Thyroid gland (tissue), 4 donors: ENCODE measurements at regions of chr1 and their contacts with region 1.

Region 1: GRCh38 chr1:212608209-212608955 is at the start of gene ATF3:
- DNase-seq: peak; percentile 100
- H3K4me3 ChIP-seq: peak within 1 kb of the TSS; percentile 14 to 77 (median 71)
- H3K27ac ChIP-seq: peak within 1 kb of the TSS; percentile 95 to 98 (median 97)
- H3K4me1 ChIP-seq: peaks cover 19 to 37% of the 10 kb centered on the region in 2 donors
- H3K27me3 ChIP-seq: no peaks in the 10 kb centered on the region
- CTCF ChIP-seq: peak in 1 of 6 experiments; percentile 25
- POLR2A ChIP-seq: peak; percentile 99 to 100
- total RNA-seq, gene ATF3: 9.2 to 21.2 (median 14.7) TPM

Region 2: DNA sequence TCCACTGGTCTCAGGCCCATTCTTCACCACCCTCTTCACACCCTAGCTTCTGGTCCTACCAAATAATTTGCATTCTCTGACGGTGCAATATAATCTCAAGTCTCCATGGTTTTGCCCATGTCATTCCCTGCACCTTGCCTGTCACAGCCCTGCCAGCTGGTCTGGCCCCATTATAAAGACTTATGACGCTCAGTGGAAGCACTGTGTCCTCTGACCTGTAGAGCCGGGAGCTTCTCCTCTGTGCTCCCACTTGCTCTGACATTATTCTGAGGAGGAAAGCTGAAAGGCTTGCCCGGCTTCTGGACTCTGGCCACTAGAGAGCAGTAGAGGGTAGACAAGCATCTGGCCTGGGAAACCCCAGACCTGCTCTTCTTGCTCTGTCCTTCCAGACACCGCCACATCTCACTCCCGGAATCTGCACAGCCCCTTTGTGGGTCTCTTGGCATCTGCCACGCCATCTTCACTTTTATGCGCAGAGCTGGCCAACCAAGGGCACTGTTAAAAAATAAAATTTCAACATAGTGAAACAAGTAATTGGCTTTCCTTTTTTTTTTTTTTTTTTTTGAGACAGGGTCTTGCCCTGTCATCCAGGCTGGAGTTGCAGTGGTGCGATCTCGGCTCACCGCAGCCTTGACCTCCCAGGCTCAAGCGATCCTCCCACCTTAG is 131.2 kb before region 1 on chr1:
- intact Hi-C with region 1: loop called (anchors 5 kb)
- DNase-seq: peak; percentile 82 to 87
- H3K4me3 ChIP-seq: no peak overlapping the region
- H3K27ac ChIP-seq: no peak overlapping the region
- H3K4me1 ChIP-seq: peaks cover 13 to 24% of the 10 kb centered on the region in 2 donors
- H3K27me3 ChIP-seq: no peaks in the 10 kb centered on the region
- CTCF ChIP-seq: peak; percentile 61 to 92 (median 84)
- POLR2A ChIP-seq: no peak

Region 3: GRCh38 chr1:212558693-212559480 is 49.5 kb before region 1 on chr1:
- intact Hi-C with region 1: loop called (anchors 5 kb)
- DNase-seq: peak; percentile 91 to 94
- H3K4me3 ChIP-seq: peak overlapping the region in 2 of 3 donors; percentile 36 to 69
- H3K27ac ChIP-seq: peak overlapping the region; percentile 77 to 99 (median 93)
- H3K4me1 ChIP-seq: peaks cover 5 to 16% of the 10 kb centered on the region in 2 donors
- H3K27me3 ChIP-seq: no peaks in the 10 kb centered on the region
- CTCF ChIP-seq: no peak
- POLR2A ChIP-seq: peak; percentile 54 to 95

Region 4: DNA sequence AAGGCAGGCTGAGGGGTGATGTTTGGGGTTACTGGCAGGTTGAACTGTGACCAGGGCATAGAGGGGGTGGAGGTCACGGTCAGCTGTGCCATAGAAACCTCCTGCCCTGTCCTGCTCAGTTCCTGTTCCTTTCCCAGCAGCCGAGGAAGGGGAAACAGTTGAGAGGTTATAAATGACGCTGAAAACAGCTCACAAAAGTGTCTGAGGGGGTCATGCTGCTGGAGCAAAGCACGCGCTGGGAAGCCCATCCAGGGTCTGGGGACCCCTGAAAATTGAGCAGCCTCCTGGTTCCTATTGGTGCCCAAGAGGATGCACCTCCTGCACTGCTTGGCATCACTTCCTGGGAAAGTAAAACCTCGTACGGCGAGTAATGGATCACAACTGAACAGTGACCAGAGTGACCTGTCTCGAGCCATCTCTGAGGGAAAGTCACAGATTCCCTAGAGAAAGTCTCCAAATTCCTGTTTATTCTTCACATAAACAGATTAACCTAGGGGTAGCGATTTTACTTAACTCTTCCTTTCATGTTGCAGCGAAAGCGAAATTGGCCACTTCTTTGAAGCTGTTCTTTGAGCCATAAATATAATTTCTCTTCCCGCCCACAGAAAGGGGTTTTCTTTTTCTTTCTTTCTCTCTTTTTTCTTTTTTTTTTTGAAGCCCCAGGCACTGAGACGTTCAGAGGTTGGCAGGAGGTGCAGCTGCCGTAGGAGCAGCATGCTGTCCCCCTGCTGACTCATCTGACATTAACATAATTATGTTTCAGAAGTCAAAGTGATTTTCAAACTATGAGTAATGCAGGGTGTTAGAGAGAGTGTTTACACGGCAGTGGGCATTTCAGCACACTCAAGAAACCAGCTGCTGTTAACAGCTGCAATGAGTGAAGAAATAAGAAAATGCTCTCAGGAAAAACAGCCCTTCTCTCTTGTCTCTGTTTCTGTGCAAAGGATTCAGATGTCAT is 41.6 kb before region 1 on chr1:
- intact Hi-C with region 1: loop called (anchors 5 kb)
- DNase-seq: peak; percentile 19 to 40
- H3K4me3 ChIP-seq: peak overlapping the region in 2 of 3 donors; percentile 15 to 37
- H3K27ac ChIP-seq: peak overlapping the region; percentile 51 to 69 (median 58)
- H3K4me1 ChIP-seq: peaks cover 0 to 11% of the 10 kb centered on the region in 2 donors
- H3K27me3 ChIP-seq: no peaks in the 10 kb centered on the region
- CTCF ChIP-seq: peak in 2 of 6 experiments; percentile 9 to 19
- POLR2A ChIP-seq: peak in 1 of 2 donors; percentile 42